Panc1 (cell line): ENCODE measurements at regions of chr3 and their contacts with region 1.

Region 1: GRCh38 chr3:27584874-27585273 is 100.7 kb upstream of the SLC4A7 start:
- DNase-seq: no peak
- ATAC-seq: no peak
- H3K4me3 ChIP-seq: no peak overlapping the region
- H3K27ac ChIP-seq: peak overlapping the region; percentile 69; the same call in 1 of the 2 replicates
- H3K4me1 ChIP-seq: peaks cover 12% of the 10 kb centered on the region
- H3K27me3 ChIP-seq: no peaks in the 10 kb centered on the region
- CTCF ChIP-seq: no peak

Region 2: DNA sequence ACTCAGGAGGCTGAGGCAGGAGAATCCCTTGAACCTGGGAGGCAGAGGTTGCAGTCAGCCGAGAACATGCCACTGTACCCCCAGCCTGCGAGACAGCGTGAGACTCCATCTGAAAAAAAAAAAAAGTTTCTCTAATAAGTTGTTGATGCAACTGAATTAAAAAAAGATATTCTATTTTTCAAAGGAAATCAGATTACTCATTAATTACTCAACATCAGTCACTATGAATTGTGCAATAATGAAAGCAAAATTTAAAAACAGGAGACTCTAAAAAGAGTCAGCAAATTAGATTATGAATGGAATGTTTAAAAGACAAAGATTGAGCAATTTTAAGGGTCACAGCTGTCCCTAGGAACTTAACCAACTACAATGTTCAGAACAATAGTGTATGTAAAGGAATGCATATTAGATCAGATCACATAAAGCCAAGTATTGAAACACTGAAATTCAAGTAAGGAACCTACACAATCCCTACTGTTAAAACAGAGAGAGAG is 40.5 kb before region 1 on chr3:
- CTCF ChIA-PET with region 1: interaction called, 4 read pairs
- POLR2A ChIA-PET with region 1: interaction called, 28 read pairs
- in situ Hi-C with region 1: no loop called
- intact Hi-C with region 1: no loop called
- DNase-seq: no peak
- ATAC-seq: no peak
- H3K4me3 ChIP-seq: no peak overlapping the region
- H3K27ac ChIP-seq: peak overlapping the region; percentile 59; the same call in 1 of the 2 replicates
- H3K4me1 ChIP-seq: peaks cover 8% of the 10 kb centered on the region; the same call in 1 of the 2 replicates
- H3K27me3 ChIP-seq: no peaks in the 10 kb centered on the region
- CTCF ChIP-seq: no peak